ENCODE measurements at regions of chr6 and their contacts with region 1.

Region 1: GRCh38 chr6:119110601-119111548 is 32.4 kb upstream of the FAM184A start:
- DNase-seq: peak; percentile 26
- H3K4me3 Mint-ChIP-seq: no peak overlapping the region
- H3K27ac Mint-ChIP-seq: no peak overlapping the region
- H3K4me1 Mint-ChIP-seq: peaks cover 16% of the 10 kb centered on the region
- H3K27me3 Mint-ChIP-seq: peaks cover 6% of the 10 kb centered on the region

Region 2: GRCh38 chr6:118283766-118284165 is 827.1 kb before region 1 on chr6:
- intact Hi-C with region 1: loop called (anchors 5 kb)
- DNase-seq: no peak
- H3K4me3 Mint-ChIP-seq: no peak overlapping the region
- H3K27ac Mint-ChIP-seq: no peak overlapping the region
- H3K4me1 Mint-ChIP-seq: peaks cover 6% of the 10 kb centered on the region
- H3K27me3 Mint-ChIP-seq: peaks cover 26% of the 10 kb centered on the region

Region 3: GRCh38 chr6:118565311-118565960 is 545.4 kb before region 1 on chr6:
- intact Hi-C with region 1: loop called (anchors 2 kb)
- DNase-seq: no peak
- H3K4me3 Mint-ChIP-seq: no peak overlapping the region
- H3K27ac Mint-ChIP-seq: no peak overlapping the region
- H3K4me1 Mint-ChIP-seq: peaks cover 20% of the 10 kb centered on the region
- H3K27me3 Mint-ChIP-seq: no peaks in the 10 kb centered on the region

Region 4: GRCh38 chr6:118800394-118801071 is 310.3 kb before region 1 on chr6:
- intact Hi-C with region 1: loop called (anchors 10 kb)
- DNase-seq: peak; percentile 75
- H3K4me3 Mint-ChIP-seq: peak overlapping the region; percentile 1
- H3K27ac Mint-ChIP-seq: peak overlapping the region; percentile 31
- H3K4me1 Mint-ChIP-seq: peaks cover 27% of the 10 kb centered on the region
- H3K27me3 Mint-ChIP-seq: no peaks in the 10 kb centered on the region

Region 5: DNA sequence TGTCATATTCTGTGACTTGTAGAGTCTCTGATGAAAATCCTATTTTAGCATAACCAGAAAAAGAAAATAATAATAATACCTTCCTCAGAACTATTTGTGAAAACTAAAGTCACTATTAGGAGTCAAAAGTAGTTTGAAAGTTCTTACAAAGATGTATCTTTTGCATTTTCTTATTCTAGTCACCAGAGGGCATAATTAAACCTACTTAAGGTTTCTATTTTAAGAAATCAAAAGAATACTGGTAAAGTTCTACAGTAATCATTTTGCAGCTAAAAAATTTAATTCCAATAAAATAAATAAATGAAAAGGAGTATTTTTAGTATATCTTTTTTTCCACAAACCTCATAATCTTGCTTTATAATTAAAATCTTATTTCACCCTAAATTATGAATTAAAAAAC is 147.9 kb before region 1 on chr6:
- intact Hi-C with region 1: loop called (anchors 1 kb)
- DNase-seq: no peak
- H3K4me3 Mint-ChIP-seq: no peak overlapping the region
- H3K27ac Mint-ChIP-seq: no peak overlapping the region
- H3K4me1 Mint-ChIP-seq: peaks cover 7% of the 10 kb centered on the region
- H3K27me3 Mint-ChIP-seq: no peaks in the 10 kb centered on the region

Region 6: GRCh38 chr6:118968416-118968815 is 142.5 kb before region 1 on chr6:
- intact Hi-C with region 1: loop called (anchors 1 kb)
- DNase-seq: no peak
- H3K4me3 Mint-ChIP-seq: no peak overlapping the region
- H3K27ac Mint-ChIP-seq: no peak overlapping the region
- H3K4me1 Mint-ChIP-seq: no peaks in the 10 kb centered on the region
- H3K27me3 Mint-ChIP-seq: no peaks in the 10 kb centered on the region

Region 7: GRCh38 chr6:119052292-119052889 is 58.5 kb before region 1 on chr6:
- intact Hi-C with region 1: loop called (anchors 2 kb)
- DNase-seq: peak; percentile 20
- H3K4me3 Mint-ChIP-seq: no peak overlapping the region
- H3K27ac Mint-ChIP-seq: peak overlapping the region; percentile 36
- H3K4me1 Mint-ChIP-seq: peaks cover 23% of the 10 kb centered on the region
- H3K27me3 Mint-ChIP-seq: no peaks in the 10 kb centered on the region